CD14-positive monocyte (primary cell): ENCODE measurements at regions of chr20 and their contacts with region 1.

Region 1: GRCh38 chr20:7375905-7376304 is 564.4 kb downstream of the HAO1 start:
- DNase-seq: peak in 2 of 3 donors; percentile 3 to 15
- H3K4me3 ChIP-seq: no peak overlapping the region
- H3K4me3 Mint-ChIP-seq: no peak overlapping the region
- H3K27ac ChIP-seq: no peak overlapping the region
- H3K27ac Mint-ChIP-seq: no peak overlapping the region
- H3K4me1 ChIP-seq: no peaks in the 10 kb centered on the region
- H3K4me1 Mint-ChIP-seq: no peaks in the 10 kb centered on the region
- H3K27me3 ChIP-seq: no peaks in the 10 kb centered on the region
- H3K27me3 Mint-ChIP-seq: peaks cover 2 to 4% (median 2%) of the 10 kb centered on the region in 3 donors
- CTCF ChIP-seq: peak; percentile 76

Region 2: GRCh38 chr20:6142348-6142993 is 1233.4 kb before region 1 on chr20:
- intact Hi-C with region 1: loop called in 1 of 2 experiments (anchors 5 kb)
- DNase-seq: peak; percentile 16 to 45 (median 34)
- H3K4me3 ChIP-seq: no peak overlapping the region
- H3K4me3 Mint-ChIP-seq: no peak overlapping the region
- H3K27ac ChIP-seq: no peak overlapping the region
- H3K27ac Mint-ChIP-seq: no peak overlapping the region
- H3K4me1 ChIP-seq: no peaks in the 10 kb centered on the region
- H3K4me1 Mint-ChIP-seq: no peaks in the 10 kb centered on the region
- H3K27me3 ChIP-seq: no peaks in the 10 kb centered on the region
- H3K27me3 Mint-ChIP-seq: peaks cover 3 to 15% (median 11%) of the 10 kb centered on the region in 3 donors
- CTCF ChIP-seq: peak; percentile 86

Region 3: DNA sequence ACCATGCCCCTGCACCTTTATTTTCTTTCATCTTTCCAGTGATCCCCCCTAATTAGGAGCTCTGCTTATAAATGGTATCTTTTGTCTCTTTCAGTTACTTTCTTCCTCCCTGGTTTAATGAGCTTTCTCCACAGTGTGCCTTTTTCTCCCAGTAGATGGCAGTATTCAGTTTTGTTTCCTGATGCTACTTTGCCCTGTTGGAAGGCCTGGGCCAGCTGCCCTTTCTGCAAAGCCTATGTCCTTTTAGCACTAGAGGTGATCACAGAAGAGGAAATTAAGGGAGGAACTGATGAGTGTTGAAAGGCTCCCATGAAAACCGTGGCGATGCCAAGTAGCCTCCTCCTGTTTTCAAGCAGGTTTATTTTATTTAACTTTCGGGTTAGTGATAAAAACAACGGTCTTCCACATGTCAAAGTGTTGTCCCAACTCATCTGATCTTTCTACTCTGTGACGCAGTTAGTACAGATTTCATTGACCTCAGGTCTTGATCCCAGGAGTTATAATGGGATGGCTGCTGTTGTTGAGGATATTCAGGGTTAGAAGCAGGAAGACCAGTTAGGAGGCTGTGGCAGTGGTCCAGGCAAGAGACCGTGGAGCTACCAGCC is 792.7 kb before region 1 on chr20:
- intact Hi-C with region 1: loop called in 1 of 2 experiments (anchors 10 kb)
- DNase-seq: peak in 1 of 3 donors; percentile 11
- H3K4me3 ChIP-seq: no peak overlapping the region
- H3K4me3 Mint-ChIP-seq: no peak overlapping the region
- H3K27ac ChIP-seq: no peak overlapping the region
- H3K27ac Mint-ChIP-seq: no peak overlapping the region
- H3K4me1 ChIP-seq: no peaks in the 10 kb centered on the region
- H3K4me1 Mint-ChIP-seq: no peaks in the 10 kb centered on the region
- H3K27me3 ChIP-seq: peaks cover 0 to 2% of the 10 kb centered on the region in 2 donors
- H3K27me3 Mint-ChIP-seq: peaks cover 3 to 5% (median 3%) of the 10 kb centered on the region in 3 donors
- CTCF ChIP-seq: peak; percentile 53

Region 4: DNA sequence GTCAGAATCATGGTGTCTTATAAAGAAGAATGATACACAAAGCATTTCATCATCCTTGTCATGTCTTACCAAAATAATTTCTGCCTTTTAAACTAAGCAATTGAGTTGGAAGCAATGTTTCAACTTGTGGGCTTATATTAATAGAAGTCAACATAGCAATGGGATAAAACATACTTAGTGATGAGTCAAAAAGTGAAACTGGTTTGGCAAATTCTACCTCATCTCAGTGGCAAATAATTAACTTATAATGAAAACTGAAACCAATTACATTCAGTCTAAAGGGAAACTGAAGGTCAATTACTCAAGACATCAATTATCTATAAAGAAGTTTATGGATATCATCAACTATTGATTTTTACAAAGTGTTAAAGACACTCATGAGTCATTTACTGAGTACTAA is 144.6 kb before region 1 on chr20:
- intact Hi-C with region 1: no loop called
- DNase-seq: no peak
- H3K4me3 ChIP-seq: no peak overlapping the region
- H3K4me3 Mint-ChIP-seq: no peak overlapping the region
- H3K27ac ChIP-seq: no peak overlapping the region
- H3K27ac Mint-ChIP-seq: no peak overlapping the region
- H3K4me1 ChIP-seq: no peaks in the 10 kb centered on the region
- H3K4me1 Mint-ChIP-seq: no peaks in the 10 kb centered on the region
- H3K27me3 ChIP-seq: no peaks in the 10 kb centered on the region
- H3K27me3 Mint-ChIP-seq: peaks cover 0 to 3% (median 0%) of the 10 kb centered on the region in 3 donors
- CTCF ChIP-seq: no peak

Region 5: GRCh38 chr20:7248281-7249201 is 127.4 kb before region 1 on chr20:
- intact Hi-C with region 1: no loop called
- DNase-seq: no peak
- H3K4me3 ChIP-seq: no peak overlapping the region
- H3K4me3 Mint-ChIP-seq: no peak overlapping the region
- H3K27ac ChIP-seq: no peak overlapping the region
- H3K27ac Mint-ChIP-seq: no peak overlapping the region
- H3K4me1 ChIP-seq: no peaks in the 10 kb centered on the region
- H3K4me1 Mint-ChIP-seq: no peaks in the 10 kb centered on the region
- H3K27me3 ChIP-seq: no peaks in the 10 kb centered on the region
- H3K27me3 Mint-ChIP-seq: peaks cover 0 to 3% (median 2%) of the 10 kb centered on the region in 3 donors
- CTCF ChIP-seq: no peak

Region 6: DNA sequence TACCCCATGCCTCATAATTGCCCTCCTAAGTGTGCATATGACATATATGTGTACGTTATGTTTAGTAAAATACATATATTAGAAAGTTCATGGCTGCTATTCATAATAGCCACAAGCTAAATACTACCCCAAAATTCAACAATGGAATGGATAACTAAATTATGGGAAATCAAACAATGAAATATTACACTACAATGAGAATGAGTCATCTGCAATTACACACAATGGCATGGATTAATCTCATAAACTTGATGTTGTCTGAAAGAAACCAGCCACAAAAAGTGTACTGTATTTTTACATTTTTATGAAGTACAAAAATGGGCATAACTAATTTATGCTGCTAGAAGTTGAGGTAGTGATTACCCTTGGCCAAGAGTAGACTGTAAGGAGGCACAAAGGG is 87.4 kb after region 1 on chr20:
- intact Hi-C with region 1: no loop called
- DNase-seq: no peak
- H3K4me3 ChIP-seq: no peak overlapping the region
- H3K4me3 Mint-ChIP-seq: no peak overlapping the region
- H3K27ac ChIP-seq: no peak overlapping the region
- H3K27ac Mint-ChIP-seq: no peak overlapping the region
- H3K4me1 ChIP-seq: no peaks in the 10 kb centered on the region
- H3K4me1 Mint-ChIP-seq: no peaks in the 10 kb centered on the region
- H3K27me3 ChIP-seq: no peaks in the 10 kb centered on the region
- H3K27me3 Mint-ChIP-seq: no peaks in the 10 kb centered on the region
- CTCF ChIP-seq: no peak